ENCODE measurements at regions of chr7 and their contacts with region 1.

Region 1: GRCh38 chr7:73557108-73557396 is 438 bp downstream of the BCL7B start:
- DNase-seq: peak; percentile 94
- H3K4me3 ChIP-seq: peak overlapping the region; percentile 90
- H3K27ac ChIP-seq: peak overlapping the region; percentile 100
- H3K4me1 ChIP-seq: peaks cover 11% of the 10 kb centered on the region
- H3K27me3 ChIP-seq: no peaks in the 10 kb centered on the region
- CTCF ChIP-seq: no peak

Region 2: DNA sequence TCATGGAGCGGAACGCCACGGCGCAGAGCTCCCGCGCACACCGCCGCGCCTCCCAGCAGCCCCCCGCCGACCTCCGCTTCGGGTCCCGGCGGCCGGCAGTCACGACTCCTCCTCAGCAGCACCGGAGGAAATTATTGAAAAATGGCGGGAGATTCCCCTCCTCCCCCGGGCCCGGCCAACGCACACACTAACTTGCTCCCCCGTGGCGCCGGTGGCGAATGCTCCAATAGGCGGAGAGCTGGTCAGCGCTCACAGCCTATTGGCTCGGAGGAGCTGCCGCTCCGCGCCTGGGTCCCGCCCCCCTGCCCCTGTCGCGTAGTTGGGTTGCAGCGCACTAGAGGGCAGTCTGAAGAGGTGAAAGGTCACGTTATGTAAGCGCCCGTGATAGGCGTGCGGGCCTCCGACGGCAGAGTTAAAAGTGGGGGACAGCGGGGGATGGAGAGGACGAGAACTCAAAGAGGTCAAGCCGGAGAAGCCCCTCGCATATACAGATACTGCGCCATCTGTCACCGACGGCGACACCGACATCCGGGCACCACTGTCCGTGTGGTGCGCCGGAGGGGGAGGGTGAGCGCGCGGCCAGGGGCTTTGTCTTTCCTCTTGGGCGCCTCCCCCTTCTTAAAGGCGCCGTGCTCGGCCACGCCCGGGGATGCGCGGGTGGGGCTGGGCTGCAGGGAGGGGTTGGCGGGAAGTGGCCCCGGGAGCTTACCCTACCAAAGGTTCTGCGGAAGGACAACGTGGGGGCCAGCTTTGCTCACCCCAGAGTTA is 34.8 kb before region 1 on chr7 and contains the start of gene BAZ1B:
- CTCF ChIA-PET with region 1: interaction called, 4 read pairs
- POLR2A ChIA-PET with region 1: no interaction called
- intact Hi-C with region 1: loop called (anchors 2 kb)
- DNase-seq: peak; percentile 99
- H3K4me3 ChIP-seq: peak within 1 kb of the TSS; percentile 92
- H3K27ac ChIP-seq: peak within 1 kb of the TSS; percentile 96
- H3K4me1 ChIP-seq: peaks cover 22% of the 10 kb centered on the region
- H3K27me3 ChIP-seq: no peaks in the 10 kb centered on the region
- CTCF ChIP-seq: 0 out of 2 replicates have a peak, but pooled peaks have one; percentile 22
- total RNA-seq, gene BAZ1B: 122 and 127 TPM in 2 replicates

Measured in A673 (cell line).